Ovary (tissue), 10 donors: ENCODE measurements at regions of chr11 and their contacts with region 1.

Region 1: DNA sequence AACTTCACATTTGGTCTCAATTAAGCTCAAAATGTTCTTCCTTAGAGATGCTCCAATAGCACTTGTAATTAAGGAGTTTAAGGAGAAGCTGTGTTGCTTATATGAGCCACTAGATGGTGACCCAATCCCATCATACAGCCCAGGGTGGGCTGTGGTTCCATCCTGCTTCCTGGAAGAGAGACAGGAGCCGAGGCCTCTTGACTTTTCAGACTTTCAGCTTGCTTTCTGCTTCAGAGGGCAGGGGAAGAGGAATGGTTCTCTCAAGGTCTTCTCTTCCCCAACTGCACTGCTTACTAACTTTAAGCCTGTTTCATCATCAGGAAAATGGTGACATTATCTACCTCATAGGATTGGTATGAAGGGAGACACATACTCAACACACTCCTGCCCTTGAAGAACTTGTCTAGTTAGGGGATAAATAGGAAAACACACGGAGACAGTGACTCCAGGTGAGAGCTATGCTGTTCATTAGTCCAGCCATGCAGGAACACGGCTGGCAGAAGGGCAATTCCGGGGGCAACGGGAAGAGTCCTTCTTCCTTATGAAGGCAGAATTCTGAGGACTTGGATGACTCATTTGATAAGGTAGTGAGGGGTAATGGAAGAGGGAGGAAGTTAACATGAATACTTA is 20.1 kb downstream of the TMEM218 start:
- DNase-seq: peak; percentile 53 to 66 (median 62)
- H3K4me3 ChIP-seq: no peak overlapping the region
- H3K27ac ChIP-seq: peak overlapping the region; percentile 50 to 54
- H3K4me1 ChIP-seq: peaks cover 4% of the 10 kb centered on the region
- H3K27me3 ChIP-seq: no peaks in the 10 kb centered on the region
- CTCF ChIP-seq: peak; percentile 66 to 78 (median 72)
- EP300 ChIP-seq: no peak
- POLR2A ChIP-seq: no peak

Region 2: GRCh38 chr11:125141686-125142535 is 50.5 kb after region 1 on chr11:
- intact Hi-C with region 1: loop called in 1 of 4 experiments (anchors 10 kb)
- DNase-seq: peak in 4 of 5 donors; percentile 39 to 64 (median 49)
- H3K4me3 ChIP-seq: no peak overlapping the region
- H3K27ac ChIP-seq: no peak overlapping the region
- H3K4me1 ChIP-seq: peaks cover 2% of the 10 kb centered on the region
- H3K27me3 ChIP-seq: no peaks in the 10 kb centered on the region
- CTCF ChIP-seq: peak; percentile 68 to 90 (median 76)
- EP300 ChIP-seq: no peak
- POLR2A ChIP-seq: no peak

Region 3: DNA sequence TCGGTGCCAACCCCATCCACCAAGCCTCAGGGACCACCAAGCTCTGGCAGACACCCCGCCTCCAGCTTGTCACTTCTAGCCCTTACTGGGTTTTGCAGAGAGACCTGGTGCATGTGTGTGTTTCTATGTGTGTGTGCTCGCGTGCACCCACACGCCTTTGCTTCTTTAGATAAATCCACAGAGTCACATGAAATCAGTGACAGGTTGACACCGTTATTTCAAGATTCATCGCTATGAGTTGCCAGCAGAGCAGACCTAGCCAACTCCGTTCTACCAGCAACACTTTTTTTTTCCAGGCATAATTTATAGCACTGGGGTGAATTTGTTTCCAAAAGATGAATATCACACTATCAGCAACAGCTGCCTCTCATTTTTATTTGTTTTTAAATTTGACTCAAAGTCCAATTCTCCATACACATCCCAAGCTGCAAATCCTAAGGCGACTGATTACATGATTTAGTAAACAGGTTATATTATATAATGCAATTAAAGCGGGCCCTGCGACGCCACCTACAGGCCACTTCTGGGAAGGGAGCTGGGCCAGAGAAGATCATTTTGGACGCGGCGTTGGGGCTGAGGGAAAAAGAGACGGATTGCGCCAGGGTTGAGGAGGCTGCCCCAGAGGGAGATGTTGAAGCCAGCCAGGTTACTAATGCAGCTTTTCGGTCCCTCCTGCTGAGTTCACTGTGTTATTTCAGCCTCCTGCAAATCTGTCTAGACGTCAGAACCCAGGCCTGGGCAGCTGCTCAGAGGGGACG is 254.2 kb after region 1 on chr11:
- intact Hi-C with region 1: loop called in 3 of 4 experiments (anchors 5 to 10 kb)
- DNase-seq: peak; percentile 84 to 93 (median 91)
- H3K4me3 ChIP-seq: no peak overlapping the region
- H3K27ac ChIP-seq: peak overlapping the region; percentile 44 to 68
- H3K4me1 ChIP-seq: peaks cover 15% of the 10 kb centered on the region
- H3K27me3 ChIP-seq: no peaks in the 10 kb centered on the region
- CTCF ChIP-seq: peak; percentile 84 to 94 (median 87)
- EP300 ChIP-seq: no peak
- POLR2A ChIP-seq: no peak

Region 4: GRCh38 chr11:125404776-125405435 is 313.5 kb after region 1 on chr11:
- intact Hi-C with region 1: loop called in 2 of 4 experiments (anchors 5 to 10 kb)
- DNase-seq: peak; percentile 67 to 87 (median 78)
- H3K4me3 ChIP-seq: no peak overlapping the region
- H3K27ac ChIP-seq: no peak overlapping the region
- H3K4me1 ChIP-seq: peaks cover 8% of the 10 kb centered on the region
- H3K27me3 ChIP-seq: no peaks in the 10 kb centered on the region
- CTCF ChIP-seq: peak; percentile 84 to 88 (median 87)
- EP300 ChIP-seq: no peak
- POLR2A ChIP-seq: no peak